A673 (cell line): ENCODE measurements at regions of chr14 and their contacts with region 1.

Region 1: DNA sequence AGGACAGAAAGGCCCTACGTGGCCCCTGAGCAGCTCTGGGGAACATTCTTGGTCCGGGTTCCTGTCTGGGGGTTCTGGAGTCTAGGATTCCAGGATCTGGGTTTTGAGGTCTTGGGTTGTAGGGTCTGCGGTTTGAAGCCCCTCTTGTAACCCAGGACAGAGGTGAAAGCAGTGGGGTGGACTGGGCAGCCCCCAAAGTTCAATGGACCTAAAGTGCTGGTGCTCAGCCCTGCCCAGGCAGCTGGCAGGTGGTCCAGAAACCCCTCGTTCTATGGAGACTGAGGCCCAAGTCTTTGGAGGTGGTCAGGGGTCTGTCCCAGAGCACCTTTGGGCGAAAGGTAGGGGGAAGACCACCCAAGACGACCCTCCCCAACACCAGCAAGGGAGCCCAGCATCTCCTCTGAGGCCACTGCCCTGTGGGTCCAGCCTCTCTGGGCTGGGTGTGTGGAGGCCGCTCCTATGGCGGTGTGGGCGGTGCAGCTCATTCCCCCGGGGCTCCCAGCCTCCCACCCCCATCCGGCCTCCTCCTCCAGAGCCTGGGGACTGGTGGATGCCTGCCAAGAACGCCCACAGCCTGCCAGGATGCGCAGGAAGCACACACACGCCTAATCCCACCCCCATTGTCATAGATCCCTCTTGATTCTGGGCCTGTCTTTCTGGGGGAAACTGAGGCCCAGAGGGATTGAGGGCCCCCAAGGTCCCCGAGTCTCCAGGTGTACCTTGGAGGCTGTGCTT is 30.2 kb upstream of the ANKRD9 start:
- DNase-seq: peak; percentile 98
- H3K4me3 ChIP-seq: peak overlapping the region; percentile 23
- H3K27ac ChIP-seq: peak overlapping the region; percentile 96
- H3K4me1 ChIP-seq: peaks cover 56% of the 10 kb centered on the region
- H3K27me3 ChIP-seq: no peaks in the 10 kb centered on the region
- CTCF ChIP-seq: no peak

Region 2: GRCh38 chr14:102154821-102155549 is 384.8 kb before region 1 on chr14:
- CTCF ChIA-PET with region 1: interaction called, 10 read pairs
- POLR2A ChIA-PET with region 1: no interaction called
- intact Hi-C with region 1: no loop called
- DNase-seq: no peak
- H3K4me3 ChIP-seq: no peak overlapping the region
- H3K27ac ChIP-seq: no peak overlapping the region
- H3K4me1 ChIP-seq: no peaks in the 10 kb centered on the region
- H3K27me3 ChIP-seq: no peaks in the 10 kb centered on the region
- CTCF ChIP-seq: no peak

Region 3: DNA sequence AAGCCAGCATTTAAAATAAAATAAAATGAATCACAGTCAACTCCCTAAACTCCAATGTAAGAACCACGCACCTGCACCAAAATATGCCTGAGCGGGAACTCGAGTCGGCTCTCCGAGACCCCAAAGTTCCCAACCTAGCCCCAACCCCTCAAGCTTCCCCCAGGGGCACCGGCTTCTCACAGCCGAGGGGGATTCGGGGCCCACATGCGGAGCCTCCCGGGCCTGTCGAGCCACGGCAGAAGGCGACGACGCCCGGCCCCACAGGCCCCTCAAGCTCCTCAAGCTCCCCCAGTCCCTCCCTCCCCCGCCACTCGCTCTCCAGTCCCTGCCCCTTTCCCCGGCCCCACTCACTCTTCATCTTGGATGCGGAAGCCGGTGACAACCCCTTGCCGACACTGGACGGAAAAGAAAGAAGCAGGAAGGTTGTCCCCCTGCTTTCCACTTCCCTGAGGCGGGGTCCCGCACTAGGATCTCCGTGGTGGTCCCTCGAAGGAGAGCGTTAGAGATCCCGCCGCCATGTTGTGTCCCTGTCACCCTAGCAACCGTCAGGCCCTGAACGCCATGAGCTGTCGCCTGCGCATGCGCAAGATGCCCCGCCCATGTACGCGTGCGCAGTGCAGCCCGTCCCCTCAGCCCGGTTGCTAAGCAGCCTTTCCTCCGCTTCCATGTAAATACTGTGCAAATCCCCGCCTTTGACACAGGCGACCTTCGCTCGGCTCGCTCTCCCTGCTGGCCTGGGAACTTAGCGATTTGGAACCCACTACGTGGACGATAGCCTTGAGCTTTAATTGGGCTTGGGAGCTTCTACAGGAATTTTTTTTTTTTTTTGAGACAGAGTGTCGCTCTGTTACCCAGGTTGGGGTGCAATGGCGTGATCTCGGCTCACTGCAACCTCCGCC is 234.9 kb before region 1 on chr14 and contains the start of gene MOK:
- CTCF ChIA-PET with region 1: no interaction called
- POLR2A ChIA-PET with region 1: no interaction called
- intact Hi-C with region 1: no loop called
- DNase-seq: peak; percentile 98
- H3K4me3 ChIP-seq: peak within 1 kb of the TSS; percentile 68
- H3K27ac ChIP-seq: peak within 1 kb of the TSS; percentile 51
- H3K4me1 ChIP-seq: no peaks in the 10 kb centered on the region
- H3K27me3 ChIP-seq: no peaks in the 10 kb centered on the region
- CTCF ChIP-seq: no peak
- total RNA-seq, gene MOK: 27.4 and 29.1 TPM in 2 replicates

Region 4: DNA sequence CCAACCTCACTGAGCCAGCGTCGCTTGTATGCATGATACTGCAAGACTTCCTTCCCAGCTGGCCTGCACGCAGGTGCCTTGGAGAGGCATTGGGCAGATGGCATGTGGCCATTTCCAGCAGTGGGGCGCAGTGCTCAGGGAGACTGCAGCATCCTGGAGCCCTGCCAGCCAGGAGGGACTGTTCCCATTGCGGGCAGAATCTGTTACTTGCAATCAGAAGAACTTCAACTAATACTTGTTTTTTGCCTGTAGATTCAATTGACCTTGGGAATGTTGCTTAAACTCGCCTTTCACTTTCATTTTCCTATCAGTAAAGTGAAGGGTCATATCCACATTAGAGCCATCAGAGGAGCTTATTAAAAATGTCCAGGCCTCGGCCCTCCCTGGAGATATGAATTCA is 60.0 kb before region 1 on chr14:
- CTCF ChIA-PET with region 1: no interaction called
- POLR2A ChIA-PET with region 1: no interaction called
- intact Hi-C with region 1: no loop called
- DNase-seq: no peak
- H3K4me3 ChIP-seq: no peak overlapping the region
- H3K27ac ChIP-seq: no peak overlapping the region
- H3K4me1 ChIP-seq: no peaks in the 10 kb centered on the region
- H3K27me3 ChIP-seq: no peaks in the 10 kb centered on the region
- CTCF ChIP-seq: no peak

Region 5: DNA sequence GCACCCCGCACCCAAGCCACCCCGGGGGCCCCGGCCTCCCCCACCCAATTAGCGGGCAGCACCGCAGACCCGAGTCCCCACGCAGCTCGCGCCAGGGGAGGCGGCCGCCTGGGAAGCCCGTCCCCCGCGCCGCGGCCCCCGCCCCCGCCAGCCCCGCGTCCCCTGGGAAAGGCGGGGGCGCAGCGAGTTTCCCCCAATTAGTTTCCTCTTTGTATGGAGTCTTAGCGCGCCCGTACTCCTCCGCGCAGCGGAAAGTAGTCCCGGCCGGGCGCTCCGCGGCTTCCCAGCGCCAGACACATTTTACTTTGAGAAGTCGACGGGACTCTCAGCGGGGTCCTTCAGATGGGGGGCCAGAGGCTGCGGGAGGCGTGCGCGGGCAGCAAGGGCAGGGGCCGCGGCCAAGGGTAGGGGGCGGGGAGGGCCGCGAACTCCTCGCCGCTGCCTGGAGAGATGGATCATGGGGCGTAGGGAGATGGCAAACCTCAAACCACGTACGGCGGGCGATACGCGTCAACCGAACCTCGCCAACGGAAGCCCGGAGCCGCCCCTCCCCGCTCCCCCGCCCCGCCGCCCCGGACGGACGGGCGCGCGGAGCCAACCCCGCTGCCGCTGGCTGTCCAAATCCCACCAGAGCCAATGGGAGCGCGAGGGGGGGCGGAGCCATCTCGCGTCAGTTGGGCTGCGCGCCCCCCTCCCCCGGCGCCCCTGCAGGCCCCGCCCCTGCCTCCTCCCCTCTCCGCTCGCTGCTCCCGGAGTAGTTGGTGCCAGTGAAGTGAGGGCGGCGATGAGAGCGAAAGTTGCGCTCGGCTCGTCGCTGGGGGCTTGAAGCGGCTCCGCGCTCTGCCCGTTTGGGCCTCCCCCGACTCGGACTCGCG is 52.4 kb after region 1 on chr14 and contains the start of gene RCOR1:
- CTCF ChIA-PET with region 1: no interaction called
- POLR2A ChIA-PET with region 1: no interaction called
- intact Hi-C with region 1: loop called (anchors 5 kb)
- DNase-seq: peak; percentile 98
- H3K4me3 ChIP-seq: peak within 1 kb of the TSS; percentile 95
- H3K27ac ChIP-seq: peak within 1 kb of the TSS; percentile 99
- H3K4me1 ChIP-seq: peaks cover 11% of the 10 kb centered on the region
- H3K27me3 ChIP-seq: no peaks in the 10 kb centered on the region
- CTCF ChIP-seq: no peak
- total RNA-seq, gene RCOR1: 97.8 and 102 TPM in 2 replicates